ENCODE measurements at regions of chr19 and their contacts with region 1.

Region 1: DNA sequence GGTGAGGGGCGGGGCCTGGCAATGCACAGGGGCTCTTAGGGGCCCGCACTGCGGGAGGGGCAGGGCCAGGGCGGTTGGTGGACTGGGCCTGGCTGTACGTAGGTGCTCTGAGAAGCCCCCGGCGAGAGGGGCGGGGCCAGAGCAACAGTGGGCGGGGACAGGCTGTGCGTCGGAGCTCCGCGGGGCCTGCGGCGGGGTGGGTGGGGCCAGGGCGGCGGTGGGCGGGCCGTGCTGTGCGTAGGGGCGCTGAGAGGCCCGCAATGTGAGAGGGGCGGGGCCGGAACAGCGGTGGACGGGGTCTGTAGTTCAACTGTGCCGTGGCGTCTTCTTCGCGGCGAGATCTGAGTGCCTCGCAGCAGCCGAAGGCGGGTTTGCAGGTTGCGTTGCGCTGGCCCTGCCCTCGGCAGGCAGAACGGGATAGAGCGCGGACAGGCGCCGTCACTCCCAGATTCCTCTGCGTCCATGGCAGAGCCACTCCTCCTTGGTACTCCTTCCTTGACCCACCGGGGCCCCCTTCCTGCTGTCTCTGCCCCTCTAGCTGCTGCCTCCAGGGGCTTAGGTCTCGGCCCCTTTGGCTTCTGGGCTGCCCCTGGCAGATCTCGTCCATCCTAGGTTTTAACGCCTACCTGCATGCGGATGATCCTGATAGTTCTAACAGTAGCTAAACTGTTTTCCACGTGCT is 33.2 kb downstream of the CCNE1 start:
- DNase-seq: peak; percentile 96
- H3K4me3 Mint-ChIP-seq: peak overlapping the region; percentile 81
- H3K27ac Mint-ChIP-seq: peak overlapping the region; percentile 85
- H3K4me1 Mint-ChIP-seq: peaks cover 9% of the 10 kb centered on the region
- H3K27me3 Mint-ChIP-seq: no peaks in the 10 kb centered on the region

Region 2: DNA sequence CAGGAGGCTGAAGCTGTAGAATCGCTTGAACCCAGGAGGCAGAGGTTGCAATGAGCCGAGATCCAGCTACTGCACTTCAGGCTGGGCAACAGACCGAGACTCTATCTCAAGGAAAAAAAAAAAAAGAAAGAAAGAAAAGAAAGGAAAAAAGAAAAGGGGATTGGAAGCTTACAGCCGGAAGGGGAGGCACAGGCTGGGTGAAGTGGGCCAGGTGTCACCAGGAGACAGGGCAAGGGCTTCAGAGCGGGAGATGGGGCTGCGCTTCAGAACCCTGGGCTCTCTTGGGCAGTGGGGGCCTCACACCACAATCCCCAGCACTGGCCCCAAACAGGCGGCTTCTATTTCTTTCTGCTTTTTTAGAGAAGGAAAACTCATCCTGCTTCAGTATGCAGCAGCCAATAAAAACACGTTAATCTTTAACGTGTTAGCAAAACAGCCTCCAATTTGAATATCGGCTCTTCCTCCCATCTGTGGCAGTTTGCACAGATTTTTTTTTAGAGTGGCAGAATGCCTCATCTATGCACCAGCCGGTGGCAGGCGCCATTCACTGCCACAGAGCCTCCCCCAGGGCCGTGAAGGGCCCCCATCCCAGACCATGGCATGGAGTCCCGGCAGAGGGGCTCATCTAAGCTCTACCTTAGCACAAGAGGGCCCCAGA is 83.3 kb before region 1 on chr19:
- CTCF ChIA-PET with region 1: interaction called, 9 read pairs
- POLR2A ChIA-PET with region 1: no interaction called
- intact Hi-C with region 1: loop called (anchors 1 kb)
- DNase-seq: no peak
- H3K4me3 Mint-ChIP-seq: no peak overlapping the region
- H3K27ac Mint-ChIP-seq: no peak overlapping the region
- H3K4me1 Mint-ChIP-seq: peaks cover 2% of the 10 kb centered on the region
- H3K27me3 Mint-ChIP-seq: no peaks in the 10 kb centered on the region

Region 3: GRCh38 chr19:29811125-29812079 is 33.6 kb before region 1 on chr19 and contains the start of gene CCNE1:
- CTCF ChIA-PET with region 1: no interaction called
- POLR2A ChIA-PET with region 1: interaction called, 3 read pairs
- intact Hi-C with region 1: loop called (anchors 1 kb)
- DNase-seq: peak; percentile 96
- H3K4me3 Mint-ChIP-seq: peak within 1 kb of the TSS; percentile 82
- H3K27ac Mint-ChIP-seq: peak within 1 kb of the TSS; percentile 86
- H3K4me1 Mint-ChIP-seq: peaks cover 17% of the 10 kb centered on the region
- H3K27me3 Mint-ChIP-seq: no peaks in the 10 kb centered on the region
- total RNA-seq, gene CCNE1: 29.3 to 29.7 TPM

Region 4: GRCh38 chr19:29831041-29831548 is 13.9 kb before region 1 on chr19:
- CTCF ChIA-PET with region 1: interaction called, 3 read pairs
- POLR2A ChIA-PET with region 1: no interaction called
- intact Hi-C with region 1: loop called (anchors 2 kb)
- DNase-seq: peak; percentile 84
- H3K4me3 Mint-ChIP-seq: peak overlapping the region; percentile 69
- H3K27ac Mint-ChIP-seq: peak overlapping the region; percentile 89
- H3K4me1 Mint-ChIP-seq: peaks cover 38% of the 10 kb centered on the region
- H3K27me3 Mint-ChIP-seq: no peaks in the 10 kb centered on the region

Region 5: GRCh38 chr19:29858000-29858596 is 13.1 kb after region 1 on chr19:
- CTCF ChIA-PET with region 1: interaction called, 11 read pairs
- POLR2A ChIA-PET with region 1: no interaction called
- intact Hi-C with region 1: no loop called
- DNase-seq: peak; percentile 58
- H3K4me3 Mint-ChIP-seq: no peak overlapping the region
- H3K27ac Mint-ChIP-seq: no peak overlapping the region
- H3K4me1 Mint-ChIP-seq: peaks cover under 1% of the 10 kb centered on the region
- H3K27me3 Mint-ChIP-seq: peaks cover 20% of the 10 kb centered on the region